Heart right ventricle (tissue), 16 donors: ENCODE measurements at regions of chr4 and their contacts with region 1.

Region 1: DNA sequence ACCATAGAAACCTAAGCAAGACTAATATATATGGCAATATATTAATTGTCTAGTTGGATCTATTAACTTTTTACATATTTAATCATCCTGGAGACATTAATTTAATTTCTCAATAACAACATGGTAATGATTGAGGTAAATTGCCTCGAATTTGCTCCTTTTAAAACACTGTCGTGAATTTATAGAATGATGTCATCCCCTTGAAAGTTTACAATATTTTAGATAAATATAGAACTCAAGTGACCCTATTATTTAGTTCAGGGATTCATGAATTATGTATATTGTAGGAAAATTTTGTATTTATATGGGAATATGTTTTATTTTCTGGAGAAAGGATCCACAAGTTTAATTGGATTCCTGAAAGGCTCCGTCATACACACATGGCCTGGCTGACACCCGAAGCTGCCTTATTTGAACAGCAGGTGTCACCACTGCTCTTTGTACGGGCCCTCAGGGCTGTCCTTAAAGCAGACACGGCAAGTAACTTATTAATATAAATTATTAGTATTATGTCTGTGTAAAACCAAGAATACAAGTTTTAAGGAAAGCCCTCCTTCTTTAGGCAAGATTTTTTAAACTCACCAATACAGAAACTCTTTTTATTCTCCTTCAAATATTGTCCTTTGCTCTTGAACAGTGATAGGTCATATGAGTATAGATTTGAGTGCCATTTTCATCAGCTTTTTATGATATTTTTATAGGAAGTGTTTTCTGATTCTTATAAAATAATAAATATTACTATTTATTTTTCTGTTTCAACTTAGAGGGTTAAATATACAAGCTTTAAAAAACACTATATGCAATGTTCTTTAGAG is 1.9 kb upstream of the PLRG1 start:
- DNase-seq: peak; percentile 43 to 72
- ATAC-seq: peak in 7 of 8 donors; percentile 58 to 75 (median 69)
- H3K4me3 ChIP-seq: no peak overlapping the region
- H3K27ac ChIP-seq: no peak overlapping the region
- H3K4me1 ChIP-seq: peaks cover 0 to 23% (median 18%) of the 10 kb centered on the region in 9 donors
- H3K27me3 ChIP-seq: no peaks in the 10 kb centered on the region
- CTCF ChIP-seq: peak; percentile 57 to 95 (median 87)

Region 2: DNA sequence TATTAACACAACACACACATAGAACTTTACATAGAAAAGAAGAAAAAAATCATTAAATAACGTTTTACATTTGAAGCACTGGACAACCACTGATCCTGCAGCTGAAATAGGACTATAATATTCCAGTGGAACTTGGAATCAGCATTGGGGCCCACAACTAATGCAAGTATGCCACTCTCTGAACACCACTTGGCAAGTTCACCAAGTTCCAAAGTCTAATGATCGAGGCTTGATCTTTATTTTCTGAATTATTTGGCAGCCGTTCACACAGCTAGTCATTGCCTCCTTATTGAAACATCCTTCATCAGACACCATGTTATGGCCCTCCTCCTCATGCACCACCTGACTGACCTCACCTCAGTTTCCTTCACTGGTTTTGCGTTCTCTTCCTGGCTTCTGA is 168.1 kb before region 1 on chr4:
- intact Hi-C with region 1: no loop called
- DNase-seq: no peak
- ATAC-seq: no peak
- H3K4me3 ChIP-seq: no peak overlapping the region
- H3K27ac ChIP-seq: no peak overlapping the region
- H3K4me1 ChIP-seq: no peaks in the 10 kb centered on the region
- H3K27me3 ChIP-seq: no peaks in the 10 kb centered on the region
- CTCF ChIP-seq: no peak

Region 3: GRCh38 chr4:154618708-154619315 is 66.7 kb after region 1 on chr4:
- intact Hi-C with region 1: loop called in 9 of 10 experiments (anchors 2 to 10 kb)
- DNase-seq: no peak
- ATAC-seq: no peak
- H3K4me3 ChIP-seq: no peak overlapping the region
- H3K27ac ChIP-seq: no peak overlapping the region
- H3K4me1 ChIP-seq: peaks cover 0 to 5% (median 0%) of the 10 kb centered on the region in 9 donors
- H3K27me3 ChIP-seq: peaks cover 0 to 3% (median 0%) of the 10 kb centered on the region in 7 donors
- CTCF ChIP-seq: peak; percentile 8 to 64 (median 53)

Region 4: GRCh38 chr4:154779362-154779947 is 227.4 kb after region 1 on chr4:
- intact Hi-C with region 1: loop called in 4 of 10 experiments (anchors 5 to 10 kb)
- DNase-seq: no peak
- ATAC-seq: no peak
- H3K4me3 ChIP-seq: no peak overlapping the region
- H3K27ac ChIP-seq: no peak overlapping the region
- H3K4me1 ChIP-seq: no peaks in the 10 kb centered on the region
- H3K27me3 ChIP-seq: peaks cover 0 to 31% (median 21%) of the 10 kb centered on the region in 7 donors
- CTCF ChIP-seq: peak in 7 of 9 donors; percentile 31 to 57 (median 40)

Region 5: GRCh38 chr4:155353923-155354540 is 802.0 kb after region 1 on chr4:
- intact Hi-C with region 1: loop called in 1 of 10 experiments (anchors 10 kb)
- DNase-seq: peak; percentile 41 to 64
- ATAC-seq: peak in 6 of 8 donors; percentile 25 to 88 (median 81)
- H3K4me3 ChIP-seq: no peak overlapping the region
- H3K27ac ChIP-seq: no peak overlapping the region
- H3K4me1 ChIP-seq: peaks cover 0 to 5% (median 0%) of the 10 kb centered on the region in 9 donors
- H3K27me3 ChIP-seq: no peaks in the 10 kb centered on the region
- CTCF ChIP-seq: peak; percentile 40 to 82 (median 73)

Region 6: DNA sequence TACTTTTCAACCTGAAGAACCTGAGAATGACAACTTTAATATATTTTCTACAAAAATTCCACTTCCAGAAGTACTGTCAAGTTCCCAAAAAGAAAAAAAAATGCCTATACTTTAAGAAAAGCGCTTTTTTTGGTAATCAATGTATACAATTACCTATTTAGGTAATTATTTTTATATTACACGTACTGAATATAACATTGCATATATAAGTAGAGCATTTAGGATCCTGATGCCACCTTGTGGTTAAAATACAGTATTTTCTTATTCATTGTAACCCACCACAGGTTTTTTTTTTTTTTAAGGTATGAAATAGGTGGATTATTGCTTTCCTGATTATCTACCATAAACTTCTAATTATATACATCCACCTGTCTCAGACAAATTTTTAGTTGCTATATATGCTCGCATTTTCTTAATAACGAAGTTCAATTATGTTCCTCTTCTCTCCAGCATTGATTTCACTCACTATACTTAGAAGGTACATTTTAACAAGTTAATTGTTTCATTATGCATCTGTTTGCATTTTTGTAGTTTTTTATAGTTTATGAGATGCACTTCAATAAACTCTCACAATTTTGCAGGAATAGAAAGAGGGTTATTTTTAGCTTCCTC is 819.5 kb after region 1 on chr4:
- intact Hi-C with region 1: loop called in 8 of 10 experiments (anchors 5 to 10 kb)
- DNase-seq: no peak
- ATAC-seq: no peak
- H3K4me3 ChIP-seq: no peak overlapping the region
- H3K27ac ChIP-seq: no peak overlapping the region
- H3K4me1 ChIP-seq: peaks cover 0 to 13% (median 9%) of the 10 kb centered on the region in 9 donors
- H3K27me3 ChIP-seq: peaks cover 0 to 44% (median 14%) of the 10 kb centered on the region in 7 donors
- CTCF ChIP-seq: peak in 8 of 9 donors; percentile 10 to 64 (median 50)

Region 7: GRCh38 chr4:155376387-155377268 is 824.5 kb after region 1 on chr4 and contains the start of gene MAP9:
- intact Hi-C with region 1: loop called in 5 of 10 experiments (anchors 5 to 10 kb)
- DNase-seq: peak; percentile 84 to 92
- ATAC-seq: peak; percentile 97 to 100 (median 98)
- H3K4me3 ChIP-seq: peak within 1 kb of the TSS; percentile 60 to 87 (median 70)
- H3K27ac ChIP-seq: peak within 1 kb of the TSS in 3 of 10 donors; percentile 27 to 64 (median 57)
- H3K4me1 ChIP-seq: peaks cover 0 to 18% (median 10%) of the 10 kb centered on the region in 9 donors
- H3K27me3 ChIP-seq: peaks cover 0 to 44% (median 14%) of the 10 kb centered on the region in 7 donors
- CTCF ChIP-seq: no peak
- total RNA-seq, gene MAP9: 6.7 to 10.7 (median 9.7) TPM